ENCODE measurements at regions of chr20 and their contacts with region 1.

Region 1: GRCh38 chr20:17504898-17505635 is 26.1 kb downstream of the BFSP1 start:
- DNase-seq: peak; percentile 57 to 74 (median 69)
- H3K4me3 ChIP-seq: peak overlapping the region; percentile 55 to 63
- H3K4me3 Mint-ChIP-seq: peak overlapping the region; percentile 89 to 97 (median 92)
- H3K27ac ChIP-seq: peak overlapping the region; percentile 54
- H3K27ac Mint-ChIP-seq: peak overlapping the region; percentile 89 to 95 (median 92)
- H3K4me1 ChIP-seq: peaks cover 46% of the 10 kb centered on the region
- H3K4me1 Mint-ChIP-seq: peaks cover 25 to 54% (median 39%) of the 10 kb centered on the region in 4 donors
- H3K27me3 ChIP-seq: no peaks in the 10 kb centered on the region
- H3K27me3 Mint-ChIP-seq: no peaks in the 10 kb centered on the region

Region 2: DNA sequence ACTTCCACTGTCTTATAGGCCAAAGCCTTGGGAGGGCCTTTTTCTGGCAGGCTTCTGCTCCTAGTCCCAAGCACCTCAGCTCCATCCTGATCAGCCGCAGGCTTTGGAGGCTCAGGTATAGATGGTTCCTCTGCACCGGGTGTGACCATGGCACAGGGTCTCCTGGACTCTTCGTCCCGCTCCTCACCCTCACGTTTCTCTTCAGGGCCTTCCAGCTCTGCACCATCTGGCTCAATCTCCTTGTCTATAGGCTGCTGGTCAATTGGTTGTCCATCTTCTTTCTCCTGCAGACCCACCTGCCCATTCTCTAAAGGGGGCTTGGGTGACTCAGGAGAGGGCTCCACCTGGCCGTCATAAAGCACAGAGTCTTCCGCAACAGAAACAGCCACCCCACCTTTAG is 10.9 kb before region 1 on chr20:
- CTCF ChIA-PET with region 1: interaction called, 13 read pairs
- POLR2A ChIA-PET with region 1: no interaction called
- intact Hi-C with region 1: no loop called
- DNase-seq: no peak
- H3K4me3 ChIP-seq: no peak overlapping the region
- H3K4me3 Mint-ChIP-seq: no peak overlapping the region
- H3K27ac ChIP-seq: no peak overlapping the region
- H3K27ac Mint-ChIP-seq: no peak overlapping the region
- H3K4me1 ChIP-seq: no peaks in the 10 kb centered on the region
- H3K4me1 Mint-ChIP-seq: no peaks in the 10 kb centered on the region
- H3K27me3 ChIP-seq: no peaks in the 10 kb centered on the region
- H3K27me3 Mint-ChIP-seq: no peaks in the 10 kb centered on the region

Region 3: DNA sequence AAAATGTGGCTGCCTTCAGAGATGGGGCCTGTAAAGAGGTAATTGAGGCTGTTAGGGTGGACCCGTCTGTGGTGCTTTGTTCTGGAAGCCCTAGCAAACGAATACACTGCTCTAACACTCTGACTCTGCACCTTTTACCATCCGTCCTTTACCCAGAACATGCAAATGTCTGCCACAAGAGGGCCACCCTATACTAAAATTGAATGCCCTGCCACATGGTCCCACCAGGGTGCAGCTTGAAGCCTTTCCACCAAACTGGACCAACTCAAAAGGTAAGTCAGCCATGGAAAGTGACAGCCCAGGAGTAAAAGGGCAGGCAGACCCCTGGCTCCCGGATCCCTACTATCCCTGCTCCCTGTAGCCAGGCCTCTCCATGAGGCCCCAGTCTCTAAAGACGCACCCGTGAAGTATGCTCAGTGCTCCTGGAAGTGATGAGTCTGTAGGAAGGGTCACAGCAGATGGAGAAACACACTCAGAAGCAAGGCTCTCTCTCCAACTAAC is 31.9 kb after region 1 on chr20:
- CTCF ChIA-PET with region 1: interaction called, 14 read pairs
- POLR2A ChIA-PET with region 1: interaction called, 4 read pairs
- intact Hi-C with region 1: loop called (anchors 1 kb)
- DNase-seq: peak; percentile 64 to 76 (median 70)
- H3K4me3 ChIP-seq: no peak overlapping the region
- H3K4me3 Mint-ChIP-seq: no peak overlapping the region
- H3K27ac ChIP-seq: no peak overlapping the region
- H3K27ac Mint-ChIP-seq: no peak overlapping the region
- H3K4me1 ChIP-seq: peaks cover 8% of the 10 kb centered on the region
- H3K4me1 Mint-ChIP-seq: peaks cover 10 to 18% (median 15%) of the 10 kb centered on the region in 4 donors
- H3K27me3 ChIP-seq: no peaks in the 10 kb centered on the region
- H3K27me3 Mint-ChIP-seq: peaks cover 16 to 20% of the 10 kb centered on the region in 2 donors

Region 4: DNA sequence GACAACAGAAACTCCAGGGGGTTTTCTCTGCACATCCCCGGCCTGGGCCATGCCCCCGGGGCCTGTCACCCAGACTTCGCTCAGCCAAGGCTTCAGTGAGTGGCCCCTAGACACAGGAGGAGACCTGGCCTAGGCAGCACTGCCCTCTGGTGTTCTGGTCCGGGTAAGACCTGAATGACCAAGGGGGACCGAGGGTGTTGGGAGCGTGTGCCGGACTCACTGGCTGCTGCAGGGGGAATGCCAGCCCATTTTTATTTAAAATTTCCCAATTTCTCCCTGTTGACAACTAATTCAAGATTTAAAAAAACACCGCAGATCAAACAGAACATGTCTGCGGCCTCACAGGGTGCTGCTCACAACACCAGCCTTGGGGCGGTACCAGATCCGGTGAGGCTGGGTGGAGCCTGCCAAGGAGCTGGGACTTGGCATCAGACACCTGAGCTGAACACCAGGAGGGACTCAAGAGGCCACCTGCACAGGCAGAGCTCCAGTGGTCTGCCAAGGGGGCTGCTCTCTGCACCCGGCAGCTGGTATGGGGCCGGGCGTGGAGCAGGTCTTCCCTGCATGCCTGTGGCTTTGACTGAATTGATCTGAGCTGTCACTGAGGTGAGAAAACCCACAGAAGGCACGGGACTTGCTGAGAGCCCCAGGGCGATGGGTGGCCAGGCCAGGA is 112.6 kb after region 1 on chr20:
- CTCF ChIA-PET with region 1: interaction called, 46 read pairs
- POLR2A ChIA-PET with region 1: interaction called, 3 read pairs
- intact Hi-C with region 1: loop called (anchors 1 kb)
- DNase-seq: peak in 4 of 5 donors; percentile 33 to 46 (median 36)
- H3K4me3 ChIP-seq: no peak overlapping the region
- H3K4me3 Mint-ChIP-seq: no peak overlapping the region
- H3K27ac ChIP-seq: no peak overlapping the region
- H3K27ac Mint-ChIP-seq: peak overlapping the region in 1 of 7 donors; percentile 42
- H3K4me1 ChIP-seq: peaks cover 3% of the 10 kb centered on the region
- H3K4me1 Mint-ChIP-seq: peaks cover 2 to 9% (median 5%) of the 10 kb centered on the region in 4 donors
- H3K27me3 ChIP-seq: no peaks in the 10 kb centered on the region
- H3K27me3 Mint-ChIP-seq: no peaks in the 10 kb centered on the region

Region 5: GRCh38 chr20:17898548-17898994 is 393.5 kb after region 1 on chr20:
- CTCF ChIA-PET with region 1: interaction called, 141 read pairs
- POLR2A ChIA-PET with region 1: interaction called, 10 read pairs
- intact Hi-C with region 1: loop called (anchors 1 kb)
- DNase-seq: peak; percentile 56 to 63 (median 60)
- H3K4me3 ChIP-seq: no peak overlapping the region
- H3K4me3 Mint-ChIP-seq: no peak overlapping the region
- H3K27ac ChIP-seq: no peak overlapping the region
- H3K27ac Mint-ChIP-seq: no peak overlapping the region
- H3K4me1 ChIP-seq: no peaks in the 10 kb centered on the region
- H3K4me1 Mint-ChIP-seq: peaks cover 4 to 8% (median 6%) of the 10 kb centered on the region in 4 donors
- H3K27me3 ChIP-seq: no peaks in the 10 kb centered on the region
- H3K27me3 Mint-ChIP-seq: peaks cover 13 to 20% of the 10 kb centered on the region in 2 donors

Region 6: DNA sequence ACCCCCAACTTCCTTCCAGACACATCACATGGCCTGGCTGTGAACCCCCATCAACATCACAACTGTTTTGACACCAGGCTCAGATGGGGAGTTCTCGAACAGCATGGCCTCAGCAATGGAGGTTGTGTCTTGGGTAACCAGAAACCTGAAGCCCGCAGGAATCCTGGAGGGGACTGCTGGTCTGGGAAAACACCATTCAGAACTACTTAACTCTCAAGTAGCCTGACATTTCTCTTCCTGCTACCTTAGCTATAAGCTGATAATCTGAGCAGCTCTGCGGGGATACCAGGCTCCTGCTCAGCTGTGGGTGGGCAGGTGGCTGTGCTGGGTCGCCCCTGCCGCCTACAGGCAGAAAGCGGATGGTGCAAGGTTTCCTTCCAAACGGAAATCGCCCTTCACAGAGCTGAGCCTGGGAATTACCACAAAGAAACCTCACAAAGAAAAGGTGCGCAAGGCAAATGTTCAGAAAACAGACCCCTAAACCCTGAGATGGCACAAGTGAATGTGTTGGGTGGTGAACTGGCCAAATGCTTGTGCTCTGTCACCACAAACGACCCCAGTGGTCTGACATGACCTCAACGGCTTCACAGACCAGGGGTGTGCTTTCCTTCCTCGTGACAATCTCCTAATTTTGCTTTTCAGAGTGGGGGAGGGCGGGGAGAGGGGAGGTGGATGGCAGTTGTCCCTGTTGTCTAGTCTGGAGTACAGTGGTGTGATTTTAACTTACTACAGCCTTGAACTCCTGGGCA is 434.0 kb after region 1 on chr20:
- CTCF ChIA-PET with region 1: interaction called, 6 read pairs
- POLR2A ChIA-PET with region 1: interaction called, 5 read pairs
- intact Hi-C with region 1: loop called (anchors 1 kb)
- DNase-seq: peak; percentile 33 to 56 (median 48)
- H3K4me3 ChIP-seq: no peak overlapping the region
- H3K4me3 Mint-ChIP-seq: peak overlapping the region in 5 of 8 donors; percentile 20 to 62 (median 47)
- H3K27ac ChIP-seq: no peak overlapping the region
- H3K27ac Mint-ChIP-seq: peak overlapping the region in 4 of 7 donors; percentile 27 to 62 (median 37)
- H3K4me1 ChIP-seq: peaks cover 13% of the 10 kb centered on the region
- H3K4me1 Mint-ChIP-seq: peaks cover 4 to 14% (median 11%) of the 10 kb centered on the region in 4 donors
- H3K27me3 ChIP-seq: no peaks in the 10 kb centered on the region
- H3K27me3 Mint-ChIP-seq: no peaks in the 10 kb centered on the region